GM12878 (cell line): ENCODE measurements at regions of chr13 and their contacts with region 1.

Region 1: DNA sequence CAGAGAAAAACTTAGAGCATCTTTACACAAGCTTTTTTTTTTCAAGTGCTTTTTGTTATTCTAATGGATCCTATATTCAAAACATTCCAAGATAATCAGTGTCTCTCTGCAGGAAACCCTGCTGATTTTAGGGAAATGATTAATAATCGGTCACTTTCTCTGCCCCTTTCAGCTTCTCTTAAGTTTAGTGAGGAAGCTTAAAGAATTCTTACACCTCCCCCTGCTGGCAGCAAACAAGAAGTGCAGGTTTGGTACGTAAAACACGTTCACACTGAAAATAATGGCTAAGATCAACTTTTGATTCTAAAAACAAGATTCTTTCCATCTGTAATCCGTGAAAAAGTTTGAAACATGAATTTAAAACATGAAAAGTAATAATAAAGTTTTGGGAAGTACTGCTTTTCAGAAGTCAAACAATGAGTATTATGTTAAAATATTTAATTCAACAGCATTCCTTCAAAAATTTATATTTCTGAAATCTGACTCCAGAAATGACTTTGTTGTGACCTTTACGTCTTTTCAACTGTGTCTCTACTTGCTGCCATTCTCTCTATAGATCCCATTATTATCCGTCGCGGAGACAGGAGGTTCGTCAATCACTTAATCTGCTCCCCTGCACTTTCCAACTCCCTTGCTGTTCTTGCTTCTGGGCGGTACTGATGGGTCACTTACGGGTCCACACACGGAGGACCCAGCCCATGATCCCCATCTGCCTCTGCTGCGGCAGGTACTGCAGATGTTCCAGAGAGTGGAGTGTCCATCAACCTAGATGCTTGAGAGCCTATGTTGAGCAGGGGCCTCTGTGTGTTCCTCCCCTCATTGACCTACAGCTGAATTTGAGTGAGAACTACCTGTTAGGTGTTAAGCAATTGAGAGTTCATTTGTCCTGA is 203.1 kb upstream of the EDNRB start:
- DNase-seq: peak; percentile 28
- ATAC-seq: peak; percentile 73
- H3K4me3 ChIP-seq: no peak overlapping the region
- H3K27ac ChIP-seq: no peak overlapping the region
- H3K4me1 ChIP-seq: no peaks in the 10 kb centered on the region
- H3K27me3 ChIP-seq: no peaks in the 10 kb centered on the region
- CTCF ChIP-seq: peak; percentile 76 to 83 (median 78)
- EP300 ChIP-seq: no peak
- POLR2A ChIP-seq: no peak
- RAD21 ChIP-seq: peak; percentile 96

Region 2: GRCh38 chr13:77774181-77774580 is 347.5 kb before region 1 on chr13:
- CTCF ChIA-PET with region 1: interaction called, 109 read pairs
- POLR2A ChIA-PET with region 1: no interaction called
- RAD21 ChIA-PET with region 1: interaction called, 23 read pairs
- SMC1A ChIA-PET with region 1: interaction called, 22 read pairs
- in situ Hi-C with region 1: loop called (anchors 5 kb)
- intact Hi-C with region 1: loop called (anchors 1 kb)
- DNase-seq: no peak
- ATAC-seq: no peak
- H3K4me3 ChIP-seq: no peak overlapping the region
- H3K27ac ChIP-seq: no peak overlapping the region
- H3K4me1 ChIP-seq: no peaks in the 10 kb centered on the region
- H3K27me3 ChIP-seq: no peaks in the 10 kb centered on the region
- CTCF ChIP-seq: no peak
- EP300 ChIP-seq: no peak
- POLR2A ChIP-seq: no peak
- RAD21 ChIP-seq: no peak

Region 3: GRCh38 chr13:77779552-77780272 is 342.0 kb before region 1 on chr13:
- CTCF ChIA-PET with region 1: interaction called, 109 read pairs
- POLR2A ChIA-PET with region 1: no interaction called
- RAD21 ChIA-PET with region 1: interaction called, 26 read pairs
- SMC1A ChIA-PET with region 1: interaction called, 32 read pairs
- in situ Hi-C with region 1: loop called (anchors 5 kb)
- intact Hi-C with region 1: loop called (anchors 1 kb)
- DNase-seq: peak; percentile 24
- ATAC-seq: peak; percentile 82
- H3K4me3 ChIP-seq: no peak overlapping the region
- H3K27ac ChIP-seq: no peak overlapping the region
- H3K4me1 ChIP-seq: no peaks in the 10 kb centered on the region; the same call in 1 of the 2 replicates
- H3K27me3 ChIP-seq: no peaks in the 10 kb centered on the region
- CTCF ChIP-seq: peak; percentile 42 to 69 (median 44); a peak in 5 of 6 replicates
- EP300 ChIP-seq: no peak
- POLR2A ChIP-seq: no peak
- RAD21 ChIP-seq: peak; percentile 85

Region 4: DNA sequence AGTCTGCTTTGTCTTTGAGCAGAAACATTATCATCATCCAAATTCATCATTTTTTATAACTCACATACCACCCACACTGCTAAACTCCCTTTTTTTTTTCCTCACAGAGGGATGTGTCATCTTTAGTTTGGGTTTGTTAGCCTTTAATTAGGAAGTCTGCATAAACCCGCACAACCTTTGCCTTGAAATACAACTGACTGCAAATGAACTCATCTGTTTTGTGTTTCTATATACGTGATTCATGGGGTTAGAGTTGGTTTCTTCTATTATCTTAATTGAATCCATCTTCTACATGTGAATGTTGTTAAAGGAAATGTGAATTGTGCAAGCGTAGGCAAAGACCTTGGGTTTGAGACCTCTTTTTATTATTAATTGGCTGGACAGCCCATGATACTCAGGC is 321.5 kb before region 1 on chr13:
- CTCF ChIA-PET with region 1: interaction called, 8 read pairs
- POLR2A ChIA-PET with region 1: no interaction called
- RAD21 ChIA-PET with region 1: interaction called, 10 read pairs
- SMC1A ChIA-PET with region 1: interaction called, 6 read pairs
- in situ Hi-C with region 1: no loop called
- intact Hi-C with region 1: no loop called
- DNase-seq: no peak
- ATAC-seq: no peak
- H3K4me3 ChIP-seq: no peak overlapping the region
- H3K27ac ChIP-seq: no peak overlapping the region
- H3K4me1 ChIP-seq: no peaks in the 10 kb centered on the region
- H3K27me3 ChIP-seq: peaks cover 0 to 3% of the 10 kb centered on the region in 2 experiments; a peak in 1 of 4 replicates
- CTCF ChIP-seq: no peak
- EP300 ChIP-seq: no peak
- POLR2A ChIP-seq: no peak
- RAD21 ChIP-seq: no peak

Region 5: DNA sequence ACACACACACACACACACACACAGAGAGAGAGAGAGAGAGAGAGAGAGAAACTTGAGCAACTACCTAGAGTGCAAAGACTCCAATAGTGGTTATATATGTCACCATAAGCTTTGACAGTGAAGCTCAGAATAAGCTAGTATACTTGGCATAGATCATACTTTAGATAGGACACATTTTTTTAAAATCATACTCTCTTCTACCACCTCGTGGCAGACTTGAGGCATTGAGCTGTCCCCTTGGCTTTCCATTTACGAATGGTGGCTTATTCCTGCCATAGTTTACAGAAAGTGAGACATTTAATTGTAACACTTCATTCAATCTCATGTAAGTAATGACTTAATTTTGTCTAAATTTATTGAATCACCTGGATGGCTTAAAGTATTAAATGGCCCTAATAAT is 311.3 kb before region 1 on chr13:
- CTCF ChIA-PET with region 1: interaction called, 66 read pairs
- POLR2A ChIA-PET with region 1: interaction called, 3 read pairs
- RAD21 ChIA-PET with region 1: interaction called, 19 read pairs
- SMC1A ChIA-PET with region 1: interaction called, 22 read pairs
- in situ Hi-C with region 1: no loop called
- intact Hi-C with region 1: loop called (anchors 1 kb)
- DNase-seq: no peak
- ATAC-seq: peak; percentile 73
- H3K4me3 ChIP-seq: no peak overlapping the region
- H3K27ac ChIP-seq: no peak overlapping the region
- H3K4me1 ChIP-seq: no peaks in the 10 kb centered on the region
- H3K27me3 ChIP-seq: no peaks in the 10 kb centered on the region
- CTCF ChIP-seq: peak; percentile 27 to 45 (median 28); a peak in 4 of 6 replicates
- EP300 ChIP-seq: no peak
- POLR2A ChIP-seq: no peak
- RAD21 ChIP-seq: peak; percentile 47

Region 6: GRCh38 chr13:77896536-77896935 is 225.2 kb before region 1 on chr13:
- CTCF ChIA-PET with region 1: interaction called, 10 read pairs
- POLR2A ChIA-PET with region 1: no interaction called
- RAD21 ChIA-PET with region 1: interaction called, 3 read pairs
- SMC1A ChIA-PET with region 1: interaction called, 5 read pairs
- in situ Hi-C with region 1: no loop called
- intact Hi-C with region 1: no loop called
- DNase-seq: no peak
- ATAC-seq: no peak
- H3K4me3 ChIP-seq: no peak overlapping the region
- H3K27ac ChIP-seq: no peak overlapping the region
- H3K4me1 ChIP-seq: no peaks in the 10 kb centered on the region; the same call in 1 of the 2 replicates
- H3K27me3 ChIP-seq: no peaks in the 10 kb centered on the region
- CTCF ChIP-seq: no peak
- EP300 ChIP-seq: no peak
- POLR2A ChIP-seq: no peak
- RAD21 ChIP-seq: no peak

Region 7: DNA sequence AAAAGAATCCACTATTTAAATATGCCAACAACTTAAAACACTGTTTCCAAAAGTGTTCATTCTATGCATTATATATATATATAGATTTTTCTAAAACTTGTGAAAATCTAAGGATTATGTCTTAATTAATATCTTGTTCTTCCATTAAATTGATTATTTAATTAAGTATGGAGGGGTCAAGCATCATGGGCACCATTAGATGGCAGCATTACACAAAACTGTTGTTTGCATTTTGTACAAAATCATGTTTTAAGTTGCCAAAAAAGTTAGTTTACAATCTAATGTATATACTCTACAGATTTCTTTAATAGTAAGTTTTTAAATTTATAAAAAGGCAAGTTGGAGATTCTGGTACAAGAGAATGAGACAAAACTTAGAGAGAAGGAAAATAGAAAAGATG is 10.1 kb after region 1 on chr13:
- CTCF ChIA-PET with region 1: interaction called, 22 read pairs
- POLR2A ChIA-PET with region 1: no interaction called
- RAD21 ChIA-PET with region 1: no interaction called
- SMC1A ChIA-PET with region 1: interaction called, 4 read pairs
- in situ Hi-C with region 1: no loop called
- intact Hi-C with region 1: no loop called
- DNase-seq: no peak
- ATAC-seq: no peak
- H3K4me3 ChIP-seq: no peak overlapping the region
- H3K27ac ChIP-seq: no peak overlapping the region
- H3K4me1 ChIP-seq: no peaks in the 10 kb centered on the region
- H3K27me3 ChIP-seq: no peaks in the 10 kb centered on the region; a peak in 1 of 4 replicates
- CTCF ChIP-seq: peak in 1 of 3 experiments; percentile 36; a peak in 1 of 6 replicates
- EP300 ChIP-seq: no peak
- POLR2A ChIP-seq: no peak
- RAD21 ChIP-seq: peak; percentile 53

Region 8: GRCh38 chr13:78228940-78229339 is 107.2 kb after region 1 on chr13:
- CTCF ChIA-PET with region 1: no interaction called
- POLR2A ChIA-PET with region 1: no interaction called
- RAD21 ChIA-PET with region 1: no interaction called
- SMC1A ChIA-PET with region 1: no interaction called
- in situ Hi-C with region 1: no loop called
- intact Hi-C with region 1: no loop called
- DNase-seq: no peak
- ATAC-seq: no peak
- H3K4me3 ChIP-seq: no peak overlapping the region
- H3K27ac ChIP-seq: no peak overlapping the region
- H3K4me1 ChIP-seq: no peaks in the 10 kb centered on the region
- H3K27me3 ChIP-seq: no peaks in the 10 kb centered on the region
- CTCF ChIP-seq: no peak
- EP300 ChIP-seq: no peak
- POLR2A ChIP-seq: no peak
- RAD21 ChIP-seq: no peak

Region 9: DNA sequence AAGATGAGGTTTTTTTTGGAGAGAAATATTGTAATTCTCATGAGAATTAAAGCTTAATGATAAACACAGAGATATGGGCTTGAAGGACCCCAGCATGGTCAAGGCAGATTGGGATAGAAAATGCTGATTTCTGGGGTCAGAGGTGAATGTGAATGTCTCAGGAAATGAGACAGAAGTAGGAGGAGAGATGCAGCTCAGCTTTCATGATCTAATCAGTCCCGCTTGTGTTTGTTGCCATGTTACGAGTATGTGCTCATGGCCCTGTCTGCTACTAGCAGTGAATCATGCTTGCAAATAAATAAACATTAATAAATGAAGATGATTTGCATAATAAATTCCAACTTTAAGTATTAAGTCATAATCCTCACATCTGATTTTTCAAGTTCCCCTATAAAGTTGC is 1336.2 kb after region 1 on chr13:
- CTCF ChIA-PET with region 1: no interaction called
- POLR2A ChIA-PET with region 1: no interaction called
- RAD21 ChIA-PET with region 1: no interaction called
- SMC1A ChIA-PET with region 1: no interaction called
- in situ Hi-C with region 1: no loop called
- intact Hi-C with region 1: no loop called
- DNase-seq: no peak
- ATAC-seq: peak; percentile 58; the same call in 2 of the 3 replicates
- H3K4me3 ChIP-seq: no peak overlapping the region
- H3K27ac ChIP-seq: no peak overlapping the region
- H3K4me1 ChIP-seq: no peaks in the 10 kb centered on the region
- H3K27me3 ChIP-seq: no peaks in the 10 kb centered on the region
- CTCF ChIP-seq: no peak
- EP300 ChIP-seq: no peak
- POLR2A ChIP-seq: no peak
- RAD21 ChIP-seq: no peak